CD14-positive monocyte (primary cell): ENCODE measurements at regions of chr6 and their contacts with region 1.

Region 1: DNA sequence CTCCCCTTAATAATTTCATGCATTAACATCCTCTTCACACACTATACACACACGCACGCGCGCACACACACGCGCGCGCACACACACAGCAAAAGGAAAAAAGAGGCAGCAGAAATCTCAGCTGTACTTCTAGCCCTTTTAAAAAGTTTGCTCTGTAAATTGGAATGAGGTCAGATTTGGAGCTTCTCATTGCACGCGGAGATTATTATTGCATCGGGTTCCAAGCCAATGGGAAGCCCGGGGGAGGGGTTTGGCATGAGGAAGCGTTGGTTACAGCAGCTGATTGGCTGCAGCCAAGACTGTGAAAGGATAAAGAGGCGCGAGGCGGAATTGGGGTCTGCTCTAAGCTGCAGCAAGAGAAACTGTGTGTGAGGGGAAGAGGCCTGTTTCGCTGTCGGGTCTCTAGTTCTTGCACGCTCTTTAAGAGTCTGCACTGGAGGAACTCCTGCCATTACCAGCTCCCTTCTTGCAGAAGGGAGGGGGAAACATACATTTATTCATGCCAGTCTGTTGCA is at the start of gene SOX4:
- DNase-seq: peak; percentile 83 to 92 (median 88)
- H3K4me3 ChIP-seq: peak within 1 kb of the TSS; percentile 82 to 94 (median 84)
- H3K4me3 Mint-ChIP-seq: peak within 1 kb of the TSS in 1 of 2 donors; percentile 45
- H3K27ac ChIP-seq: peak within 1 kb of the TSS; percentile 79 to 85
- H3K27ac Mint-ChIP-seq: peak within 1 kb of the TSS in 6 of 7 donors; percentile 40 to 94 (median 91)
- H3K4me1 ChIP-seq: peaks cover 20 to 35% of the 10 kb centered on the region in 2 donors
- H3K4me1 Mint-ChIP-seq: peaks cover 12% of the 10 kb centered on the region
- H3K27me3 ChIP-seq: no peaks in the 10 kb centered on the region
- H3K27me3 Mint-ChIP-seq: peaks cover 0 to 4% (median 1%) of the 10 kb centered on the region in 3 donors
- CTCF ChIP-seq: no peak
- polyA plus RNA-seq, gene SOX4: 2.2 to 15.7 (median 2.5) TPM

Region 2: GRCh38 chr6:20202324-20202658 is 1391.2 kb before region 1 on chr6:
- intact Hi-C with region 1: loop called in 1 of 2 experiments (anchors 10 kb)
- DNase-seq: no peak
- H3K4me3 ChIP-seq: no peak overlapping the region
- H3K4me3 Mint-ChIP-seq: no peak overlapping the region
- H3K27ac ChIP-seq: peak overlapping the region in 1 of 2 donors; percentile 73
- H3K27ac Mint-ChIP-seq: peak overlapping the region; percentile 33 to 90 (median 80)
- H3K4me1 ChIP-seq: peaks cover 63 to 76% of the 10 kb centered on the region in 2 donors
- H3K4me1 Mint-ChIP-seq: peaks cover 77% of the 10 kb centered on the region
- H3K27me3 ChIP-seq: no peaks in the 10 kb centered on the region
- H3K27me3 Mint-ChIP-seq: peaks cover 0 to 1% (median 1%) of the 10 kb centered on the region in 3 donors
- CTCF ChIP-seq: no peak

Region 3: GRCh38 chr6:20564777-20565176 is 1028.7 kb before region 1 on chr6:
- intact Hi-C with region 1: loop called in 1 of 2 experiments (anchors 5 kb)
- DNase-seq: no peak
- H3K4me3 ChIP-seq: no peak overlapping the region
- H3K4me3 Mint-ChIP-seq: no peak overlapping the region
- H3K27ac ChIP-seq: no peak overlapping the region
- H3K27ac Mint-ChIP-seq: no peak overlapping the region
- H3K4me1 ChIP-seq: no peaks in the 10 kb centered on the region
- H3K4me1 Mint-ChIP-seq: no peaks in the 10 kb centered on the region
- H3K27me3 ChIP-seq: no peaks in the 10 kb centered on the region
- H3K27me3 Mint-ChIP-seq: no peaks in the 10 kb centered on the region
- CTCF ChIP-seq: no peak

Region 4: GRCh38 chr6:21522797-21523456 is 70.5 kb before region 1 on chr6:
- intact Hi-C with region 1: no loop called
- DNase-seq: no peak
- H3K4me3 ChIP-seq: no peak overlapping the region
- H3K4me3 Mint-ChIP-seq: no peak overlapping the region
- H3K27ac ChIP-seq: no peak overlapping the region
- H3K27ac Mint-ChIP-seq: no peak overlapping the region
- H3K4me1 ChIP-seq: no peaks in the 10 kb centered on the region
- H3K4me1 Mint-ChIP-seq: no peaks in the 10 kb centered on the region
- H3K27me3 ChIP-seq: no peaks in the 10 kb centered on the region
- H3K27me3 Mint-ChIP-seq: peaks cover 1 to 4% (median 2%) of the 10 kb centered on the region in 3 donors
- CTCF ChIP-seq: no peak

Region 5: GRCh38 chr6:21556968-21557721 is 36.3 kb before region 1 on chr6:
- intact Hi-C with region 1: no loop called
- DNase-seq: no peak
- H3K4me3 ChIP-seq: no peak overlapping the region
- H3K4me3 Mint-ChIP-seq: no peak overlapping the region
- H3K27ac ChIP-seq: no peak overlapping the region
- H3K27ac Mint-ChIP-seq: no peak overlapping the region
- H3K4me1 ChIP-seq: no peaks in the 10 kb centered on the region
- H3K4me1 Mint-ChIP-seq: no peaks in the 10 kb centered on the region
- H3K27me3 ChIP-seq: no peaks in the 10 kb centered on the region
- H3K27me3 Mint-ChIP-seq: no peaks in the 10 kb centered on the region
- CTCF ChIP-seq: no peak

Region 6: DNA sequence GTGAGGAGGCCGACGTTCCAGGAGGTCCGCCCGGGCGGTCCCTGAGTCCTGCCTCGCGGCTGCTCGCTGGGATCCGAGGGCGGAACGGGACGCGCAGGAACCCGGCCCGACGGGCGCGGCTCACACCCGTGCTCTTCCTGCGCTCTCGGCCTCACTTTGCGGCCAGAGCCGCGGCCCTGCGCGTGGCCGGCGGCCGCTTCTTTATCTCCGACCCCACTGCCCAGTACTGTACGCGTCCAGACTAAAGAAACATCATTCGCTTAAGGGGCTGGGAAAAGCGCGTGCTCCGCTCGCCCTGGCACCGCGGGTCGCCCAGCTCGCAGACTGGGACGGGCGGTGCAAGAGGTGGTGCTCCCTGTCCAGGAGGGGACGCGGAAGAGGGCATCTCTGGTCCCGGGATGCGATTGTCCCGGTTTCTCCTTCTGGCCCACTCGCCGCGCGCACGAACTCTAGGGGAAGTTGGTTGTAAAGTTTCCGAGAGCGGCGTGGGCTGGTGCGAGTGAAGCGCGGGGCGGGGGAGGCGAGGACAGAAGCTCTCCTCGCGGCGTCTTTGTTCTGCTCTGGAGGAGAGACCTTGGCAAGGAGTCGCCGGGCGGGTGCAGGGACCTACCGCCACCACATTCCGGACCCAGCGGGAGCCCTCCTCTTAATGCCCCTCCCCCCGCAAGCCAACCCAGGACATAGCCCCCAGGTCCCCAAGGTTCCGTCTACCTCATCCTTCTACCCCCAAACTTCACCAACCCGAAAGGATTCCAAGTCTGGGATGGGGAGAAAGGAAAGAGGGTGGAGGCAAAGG is 71.0 kb after region 1 on chr6:
- intact Hi-C with region 1: no loop called
- DNase-seq: peak in 2 of 3 donors; percentile 18 to 22
- H3K4me3 ChIP-seq: peak overlapping the region in 2 of 3 experiments; percentile 27 to 71
- H3K4me3 Mint-ChIP-seq: peak overlapping the region; percentile 80 to 93
- H3K27ac ChIP-seq: no peak overlapping the region
- H3K27ac Mint-ChIP-seq: no peak overlapping the region
- H3K4me1 ChIP-seq: peaks cover 33 to 36% of the 10 kb centered on the region in 2 donors
- H3K4me1 Mint-ChIP-seq: peaks cover 37% of the 10 kb centered on the region
- H3K27me3 ChIP-seq: peaks cover 43 to 65% of the 10 kb centered on the region in 2 donors
- H3K27me3 Mint-ChIP-seq: peaks cover 61 to 72% (median 64%) of the 10 kb centered on the region in 3 donors
- CTCF ChIP-seq: peak; percentile 10

Region 7: DNA sequence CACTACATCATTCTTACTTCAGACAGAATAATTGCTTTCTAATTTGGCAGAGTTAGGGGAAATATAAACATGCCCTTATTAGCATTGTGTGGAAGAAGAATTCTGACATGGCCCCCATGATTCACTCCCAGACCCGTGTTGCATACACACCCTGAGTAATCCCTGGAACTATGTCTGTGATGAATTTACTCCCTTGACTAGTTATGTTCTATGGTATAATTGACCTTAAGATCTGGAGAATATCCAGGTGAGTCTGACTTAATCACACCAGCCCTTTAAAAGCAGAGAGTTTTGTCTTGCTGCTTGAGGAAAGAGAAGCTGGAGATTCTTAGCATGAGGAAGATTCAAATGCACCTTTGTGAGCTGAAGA is 263.0 kb after region 1 on chr6:
- intact Hi-C with region 1: loop called (anchors 5 to 10 kb)
- DNase-seq: peak; percentile 75 to 88 (median 86)
- H3K4me3 ChIP-seq: peak overlapping the region; percentile 31 to 88 (median 72)
- H3K4me3 Mint-ChIP-seq: peak overlapping the region; percentile 68 to 89
- H3K27ac ChIP-seq: peak overlapping the region; percentile 98 to 100
- H3K27ac Mint-ChIP-seq: peak overlapping the region; percentile 99 to 100 (median 99)
- H3K4me1 ChIP-seq: peaks cover 34 to 45% of the 10 kb centered on the region in 2 donors
- H3K4me1 Mint-ChIP-seq: peaks cover 41% of the 10 kb centered on the region
- H3K27me3 ChIP-seq: no peaks in the 10 kb centered on the region
- H3K27me3 Mint-ChIP-seq: peaks cover 0 to 2% (median 0%) of the 10 kb centered on the region in 3 donors
- CTCF ChIP-seq: no peak

Region 8: GRCh38 chr6:21987501-21987957 is 394.1 kb after region 1 on chr6:
- intact Hi-C with region 1: loop called in 1 of 2 experiments (anchors 10 kb)
- DNase-seq: peak; percentile 78 to 90 (median 83)
- H3K4me3 ChIP-seq: peak overlapping the region; percentile 49 to 87 (median 81)
- H3K4me3 Mint-ChIP-seq: peak overlapping the region; percentile 71 to 74
- H3K27ac ChIP-seq: peak overlapping the region; percentile 83 to 85
- H3K27ac Mint-ChIP-seq: peak overlapping the region; percentile 83 to 95 (median 94)
- H3K4me1 ChIP-seq: peaks cover 23 to 24% of the 10 kb centered on the region in 2 donors
- H3K4me1 Mint-ChIP-seq: peaks cover 24% of the 10 kb centered on the region
- H3K27me3 ChIP-seq: no peaks in the 10 kb centered on the region
- H3K27me3 Mint-ChIP-seq: peaks cover 0 to 2% (median 0%) of the 10 kb centered on the region in 3 donors
- CTCF ChIP-seq: no peak